ENCODE measurements at regions of chr20 and their contacts with region 1.

Region 1: GRCh38 chr20:62740286-62741141 is 31.9 kb downstream of the NTSR1 start:
- DNase-seq: peak; percentile 84
- H3K4me3 Mint-ChIP-seq: peak overlapping the region; percentile 65
- H3K27ac Mint-ChIP-seq: peak overlapping the region; percentile 80
- H3K4me1 Mint-ChIP-seq: peaks cover 31% of the 10 kb centered on the region
- H3K27me3 Mint-ChIP-seq: peaks cover 15% of the 10 kb centered on the region

Region 2: GRCh38 chr20:62603021-62603906 is 137.2 kb before region 1 on chr20:
- intact Hi-C with region 1: loop called (anchors 1 kb)
- DNase-seq: peak; percentile 25
- H3K4me3 Mint-ChIP-seq: peak overlapping the region; percentile 78
- H3K27ac Mint-ChIP-seq: peak overlapping the region; percentile 79
- H3K4me1 Mint-ChIP-seq: peaks cover 48% of the 10 kb centered on the region
- H3K27me3 Mint-ChIP-seq: peaks cover 21% of the 10 kb centered on the region

Region 3: DNA sequence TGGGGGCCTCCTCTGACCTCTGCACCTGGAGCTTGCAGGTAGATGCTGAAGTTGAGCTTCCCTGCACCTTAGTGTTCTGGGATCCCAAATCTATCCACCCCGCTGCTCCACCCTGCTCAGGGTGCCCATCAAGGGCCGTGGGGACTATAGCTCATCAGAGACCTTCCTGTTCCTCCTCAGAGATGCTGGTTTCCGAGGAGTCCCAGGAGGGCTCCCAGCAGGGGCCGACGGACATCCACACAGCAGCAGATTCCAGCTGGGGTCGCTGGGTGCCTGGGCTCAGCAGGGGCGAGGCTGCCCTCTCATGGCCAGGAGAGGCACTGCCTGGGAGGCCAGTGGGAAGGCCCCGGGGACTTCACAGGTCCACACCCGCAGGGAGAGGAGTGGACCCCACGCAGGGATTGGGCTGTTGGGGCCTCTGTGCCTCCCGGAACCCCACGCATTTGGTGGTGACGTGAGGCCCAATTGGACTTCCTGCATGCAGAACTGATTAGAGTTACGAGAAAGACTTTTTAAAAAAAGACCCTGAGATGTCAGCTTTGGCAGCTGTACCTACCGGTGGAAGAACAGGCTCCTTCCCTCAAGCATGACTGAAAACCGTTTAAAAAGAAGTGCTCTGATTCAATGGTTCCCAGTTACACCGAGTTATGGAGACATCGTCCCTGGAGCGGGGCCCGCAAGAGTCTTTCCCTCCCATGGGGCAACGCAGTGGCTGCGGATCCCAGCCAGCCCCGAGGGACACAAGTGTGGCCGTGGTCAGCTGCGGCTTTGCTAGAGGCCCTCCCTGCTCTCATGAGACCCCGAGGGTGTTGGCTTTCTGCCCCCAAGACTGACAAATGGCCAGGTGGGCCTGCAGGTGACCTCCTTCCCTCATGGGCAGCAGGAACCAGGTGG is 123.5 kb before region 1 on chr20:
- intact Hi-C with region 1: loop called (anchors 1 kb)
- DNase-seq: peak; percentile 63
- H3K4me3 Mint-ChIP-seq: peak overlapping the region; percentile 81
- H3K27ac Mint-ChIP-seq: peak overlapping the region; percentile 96
- H3K4me1 Mint-ChIP-seq: peaks cover 28% of the 10 kb centered on the region
- H3K27me3 Mint-ChIP-seq: peaks cover 9% of the 10 kb centered on the region

Region 4: DNA sequence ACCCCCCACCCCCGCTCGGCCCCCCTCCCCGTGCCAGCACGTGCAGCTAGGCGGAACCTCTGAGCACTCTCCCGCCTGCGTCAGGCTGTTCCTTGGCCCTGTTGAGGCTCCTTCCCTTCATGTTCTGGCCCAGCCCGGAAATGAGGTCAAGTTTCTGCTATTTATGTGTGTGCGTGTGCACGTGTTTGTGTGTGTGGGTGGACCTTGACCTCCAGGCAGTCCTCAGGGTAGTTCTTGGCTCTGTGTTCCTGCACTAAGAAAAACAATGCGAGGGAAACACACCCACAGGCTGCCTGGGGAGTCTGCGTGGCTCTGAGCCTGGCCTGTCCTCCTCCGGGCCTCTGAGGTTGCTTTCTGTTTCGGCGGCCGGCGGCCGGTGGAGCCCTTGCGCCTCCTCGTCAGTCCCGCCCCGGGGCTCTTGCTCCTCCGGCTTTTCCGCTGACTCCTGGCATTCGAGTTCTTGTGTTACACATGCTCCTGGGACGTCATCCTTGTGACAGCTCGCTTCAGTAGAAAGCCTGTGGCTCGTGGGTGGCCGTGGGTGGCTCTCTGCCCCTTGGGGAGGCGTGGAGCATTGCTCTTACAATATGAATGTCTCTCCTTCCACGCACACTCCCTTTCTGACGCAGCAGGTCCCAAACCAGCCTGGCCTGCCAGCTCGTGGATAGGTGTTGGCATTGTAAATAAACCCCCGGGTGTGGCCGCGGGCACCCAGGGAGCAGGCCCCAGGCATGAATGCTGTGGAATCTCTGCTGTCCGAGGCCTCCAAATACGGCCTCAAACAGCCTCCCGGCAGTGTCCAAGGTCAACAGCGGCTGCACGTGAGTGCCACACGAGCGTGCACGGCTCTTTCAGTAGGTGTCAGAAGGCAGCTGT is 88.2 kb before region 1 on chr20:
- intact Hi-C with region 1: loop called (anchors 1 kb)
- DNase-seq: peak; percentile 63
- H3K4me3 Mint-ChIP-seq: peak overlapping the region; percentile 76
- H3K27ac Mint-ChIP-seq: peak overlapping the region; percentile 94
- H3K4me1 Mint-ChIP-seq: peaks cover 37% of the 10 kb centered on the region
- H3K27me3 Mint-ChIP-seq: no peaks in the 10 kb centered on the region

Region 5: DNA sequence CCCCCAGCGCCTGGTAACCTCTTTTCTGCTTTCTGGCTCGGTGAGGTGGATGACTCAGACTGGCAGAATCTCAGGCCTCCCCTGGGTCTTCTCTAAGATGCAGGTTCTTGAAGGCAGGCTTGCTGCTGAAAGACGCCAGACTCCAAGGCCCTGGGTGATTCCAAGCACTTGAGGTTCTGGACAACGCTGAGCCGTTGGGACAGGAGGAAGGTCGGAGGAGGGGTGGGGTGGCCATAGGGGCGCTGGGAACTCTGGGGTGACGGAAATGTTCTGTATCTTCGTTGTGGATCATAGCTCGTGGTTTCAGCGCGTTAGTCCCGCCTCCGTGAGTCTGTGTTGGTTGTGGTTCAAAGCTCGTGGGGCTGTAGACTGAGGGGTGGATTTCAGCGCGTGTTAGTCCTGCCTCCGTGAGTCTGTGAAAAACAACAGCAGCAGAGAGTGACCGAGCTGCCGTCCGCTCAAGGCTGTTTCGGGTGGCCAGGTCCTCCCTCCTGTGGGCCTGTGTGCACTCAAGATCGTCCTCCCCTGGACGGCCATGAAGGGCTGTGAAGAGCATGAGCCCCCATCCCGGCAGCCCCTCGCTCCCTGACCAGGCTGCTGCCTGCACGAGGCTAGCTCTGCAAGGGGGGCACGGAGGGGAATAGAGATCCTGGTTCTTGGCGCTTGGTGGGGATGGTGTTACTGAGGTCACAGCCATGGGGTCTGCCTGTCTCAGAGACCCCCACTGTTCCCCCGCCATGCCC is 24.1 kb before region 1 on chr20:
- intact Hi-C with region 1: loop called (anchors 1 kb)
- DNase-seq: no peak
- H3K4me3 Mint-ChIP-seq: peak overlapping the region; percentile 43
- H3K27ac Mint-ChIP-seq: peak overlapping the region; percentile 33
- H3K4me1 Mint-ChIP-seq: peaks cover 12% of the 10 kb centered on the region
- H3K27me3 Mint-ChIP-seq: peaks cover 37% of the 10 kb centered on the region

Region 6: DNA sequence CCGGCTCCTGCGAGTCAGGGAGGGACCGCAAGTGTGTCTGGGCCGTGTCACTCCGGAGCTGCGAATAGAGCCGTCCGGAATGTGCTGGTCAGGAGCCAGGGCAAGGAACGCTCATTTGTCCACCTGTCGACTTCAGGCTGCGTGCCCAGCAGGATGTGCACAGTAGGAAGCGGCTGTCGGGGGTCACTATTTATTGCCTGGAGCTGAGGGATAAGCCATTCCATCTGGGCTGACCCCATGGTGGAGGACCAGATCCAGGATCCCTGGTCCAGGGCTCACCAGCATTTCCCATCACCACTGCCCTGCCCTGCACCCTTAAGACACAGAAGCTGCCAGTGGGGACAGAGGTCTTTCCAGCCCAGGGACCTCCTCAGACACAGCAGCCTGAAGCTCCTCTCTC is 17.2 kb before region 1 on chr20:
- intact Hi-C with region 1: loop called (anchors 1 kb)
- DNase-seq: no peak
- H3K4me3 Mint-ChIP-seq: no peak overlapping the region
- H3K27ac Mint-ChIP-seq: no peak overlapping the region
- H3K4me1 Mint-ChIP-seq: peaks cover 12% of the 10 kb centered on the region
- H3K27me3 Mint-ChIP-seq: peaks cover 33% of the 10 kb centered on the region

Region 7: DNA sequence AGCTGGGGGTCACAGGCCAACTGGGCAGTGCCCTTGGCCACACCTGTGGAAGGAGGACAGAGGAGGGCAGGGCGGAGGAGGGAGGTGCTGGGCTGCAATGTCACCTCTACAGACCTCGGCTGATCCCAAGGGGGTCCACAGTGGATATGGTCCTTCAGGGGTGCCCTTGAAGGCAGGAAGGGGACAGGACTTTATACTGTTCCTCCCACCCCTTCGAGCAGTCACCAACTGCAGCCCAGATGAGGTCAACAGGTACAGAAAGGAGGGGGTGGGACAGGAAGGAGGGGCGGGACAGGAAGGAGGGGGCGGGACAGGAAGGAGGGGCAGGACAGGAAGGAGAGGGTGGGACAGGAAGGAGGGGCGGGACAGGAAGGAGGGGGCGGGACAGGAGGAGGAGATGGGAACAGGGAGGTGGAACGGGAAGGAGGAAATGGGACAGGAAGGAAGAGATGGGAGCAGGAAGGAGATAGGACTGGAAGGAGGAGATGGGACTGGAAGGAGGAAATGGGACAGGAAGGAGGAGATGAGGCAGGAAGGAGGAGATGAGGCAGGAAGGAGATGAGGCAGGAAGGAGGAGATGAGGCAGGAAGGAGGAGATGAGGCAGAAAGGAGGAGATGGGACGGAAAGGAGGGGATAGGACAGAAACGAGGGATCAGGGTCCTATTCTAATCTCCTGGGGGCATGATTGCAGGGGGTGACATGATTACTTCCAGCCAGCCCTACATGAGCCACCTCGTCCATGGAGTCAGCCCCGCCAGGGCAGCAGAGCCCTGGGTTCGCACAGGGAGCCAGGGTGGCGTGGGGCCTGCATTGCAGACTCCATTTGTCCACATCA is 36.4 kb after region 1 on chr20:
- intact Hi-C with region 1: loop called (anchors 1 kb)
- DNase-seq: peak; percentile 51
- H3K4me3 Mint-ChIP-seq: peak overlapping the region; percentile 61
- H3K27ac Mint-ChIP-seq: peak overlapping the region; percentile 91
- H3K4me1 Mint-ChIP-seq: peaks cover 36% of the 10 kb centered on the region
- H3K27me3 Mint-ChIP-seq: peaks cover 5% of the 10 kb centered on the region

Region 8: DNA sequence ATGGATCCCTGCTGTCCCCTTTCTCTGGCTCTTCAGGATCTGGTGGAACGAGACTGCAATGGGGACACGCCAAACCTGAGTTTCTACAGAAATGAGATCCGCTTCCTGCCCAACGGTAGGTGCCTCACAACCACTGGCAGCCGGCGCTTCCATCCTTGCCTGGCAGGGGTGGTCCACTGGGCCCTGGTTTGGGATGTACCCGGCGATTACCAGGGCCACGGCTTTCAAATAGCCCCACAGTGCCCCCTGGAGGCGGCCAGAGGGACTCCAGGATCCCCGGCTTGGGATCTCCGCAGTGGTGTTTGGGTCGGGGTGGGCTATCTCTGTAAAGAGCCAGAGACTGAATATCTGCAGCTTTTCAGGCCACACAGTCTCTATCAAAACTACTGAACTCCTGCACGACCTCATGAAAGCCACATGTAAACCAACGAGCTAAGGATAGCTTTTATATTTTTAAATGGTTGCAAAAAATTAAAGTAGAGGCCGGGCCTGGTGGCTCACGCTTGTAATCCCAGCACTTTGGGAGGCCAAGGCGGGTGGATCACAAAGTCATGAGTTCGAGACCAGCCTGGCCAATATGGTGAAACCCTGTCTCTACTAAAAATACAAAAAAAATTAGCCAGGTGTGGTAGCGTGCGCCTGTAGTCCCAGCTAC is 67.8 kb after region 1 on chr20:
- intact Hi-C with region 1: no loop called
- DNase-seq: peak; percentile 59
- H3K4me3 Mint-ChIP-seq: peak overlapping the region; percentile 65
- H3K27ac Mint-ChIP-seq: no peak overlapping the region
- H3K4me1 Mint-ChIP-seq: peaks cover 21% of the 10 kb centered on the region
- H3K27me3 Mint-ChIP-seq: no peaks in the 10 kb centered on the region